Activated naive CD4-positive, alpha-beta T cell treated with anti-CD3 and anti-CD28 coated beads, Interleukin-2, amount 10 ng/mL, durations not matched to agents 7 days and 5 days (primary cell): ENCODE measurements at regions of chr1 and their contacts with region 1.

Region 1: GRCh38 chr1:197521118-197521739 is 253.2 kb downstream of the CRB1 start:
- DNase-seq: peak; percentile 21
- H3K4me3 Mint-ChIP-seq: no peak overlapping the region
- H3K27ac Mint-ChIP-seq: no peak overlapping the region
- H3K4me1 Mint-ChIP-seq: peaks cover 3% of the 10 kb centered on the region
- H3K27me3 Mint-ChIP-seq: no peaks in the 10 kb centered on the region

Region 2: GRCh38 chr1:197314682-197315081 is 206.5 kb before region 1 on chr1:
- CTCF ChIA-PET with region 1: no interaction called
- DNase-seq: no peak
- H3K4me3 Mint-ChIP-seq: no peak overlapping the region
- H3K27ac Mint-ChIP-seq: no peak overlapping the region
- H3K4me1 Mint-ChIP-seq: no peaks in the 10 kb centered on the region
- H3K27me3 Mint-ChIP-seq: no peaks in the 10 kb centered on the region

Region 3: DNA sequence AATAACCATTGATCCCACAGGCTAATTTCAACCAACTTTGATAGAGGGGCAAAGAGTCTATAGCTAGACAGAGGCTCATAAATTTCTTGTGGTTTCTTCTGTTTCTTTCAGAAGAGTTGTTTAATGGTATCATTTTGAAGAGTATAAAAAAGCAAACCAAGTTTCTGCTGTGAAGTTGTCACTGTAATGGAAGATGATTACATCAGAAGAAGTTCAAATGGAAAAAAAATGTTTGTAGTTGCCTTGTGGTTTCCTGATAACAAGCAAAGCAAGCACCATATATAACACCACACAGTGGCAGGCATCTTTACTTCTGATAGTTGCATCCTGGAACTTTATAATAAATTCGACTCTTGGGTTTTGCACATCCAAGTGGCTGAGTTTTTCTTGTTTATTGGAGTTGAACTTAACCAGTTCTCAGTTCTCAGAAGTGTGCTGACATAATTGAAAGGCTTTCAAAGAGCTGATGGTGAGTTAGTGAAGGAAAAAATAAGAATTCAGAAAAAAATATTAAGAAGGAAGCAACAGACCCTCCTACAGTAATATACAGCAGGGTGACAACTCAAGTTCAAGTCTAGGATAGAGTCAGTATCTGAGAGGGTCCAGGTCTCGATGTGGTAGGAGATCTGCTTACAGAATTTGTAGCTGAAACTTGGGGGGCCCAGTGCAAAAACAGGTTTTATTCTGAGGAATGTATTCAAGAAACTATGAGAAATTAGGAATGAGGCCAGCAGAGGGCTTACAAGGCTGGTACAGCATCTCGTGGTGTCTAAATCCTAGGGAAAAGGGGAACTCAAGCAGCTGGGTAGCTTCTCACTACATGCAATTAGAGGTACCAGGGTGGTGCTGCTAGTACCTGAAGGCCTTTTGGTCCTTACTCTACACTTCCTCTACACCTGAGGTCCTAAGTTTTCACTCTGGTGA is 129.7 kb before region 1 on chr1:
- CTCF ChIA-PET with region 1: no interaction called
- DNase-seq: peak; percentile 22
- H3K4me3 Mint-ChIP-seq: no peak overlapping the region
- H3K27ac Mint-ChIP-seq: peak overlapping the region; percentile 86
- H3K4me1 Mint-ChIP-seq: peaks cover 26% of the 10 kb centered on the region
- H3K27me3 Mint-ChIP-seq: no peaks in the 10 kb centered on the region

Region 4: GRCh38 chr1:197541411-197541810 is 20.2 kb after region 1 on chr1:
- CTCF ChIA-PET with region 1: interaction called, 11 read pairs
- DNase-seq: no peak
- H3K4me3 Mint-ChIP-seq: no peak overlapping the region
- H3K27ac Mint-ChIP-seq: no peak overlapping the region
- H3K4me1 Mint-ChIP-seq: no peaks in the 10 kb centered on the region
- H3K27me3 Mint-ChIP-seq: no peaks in the 10 kb centered on the region

Region 5: GRCh38 chr1:197868751-197869489 is 347.7 kb after region 1 on chr1:
- CTCF ChIA-PET with region 1: interaction called, 24 read pairs
- DNase-seq: peak; percentile 56
- H3K4me3 Mint-ChIP-seq: no peak overlapping the region
- H3K27ac Mint-ChIP-seq: no peak overlapping the region
- H3K4me1 Mint-ChIP-seq: no peaks in the 10 kb centered on the region
- H3K27me3 Mint-ChIP-seq: peaks cover 11% of the 10 kb centered on the region

Region 6: GRCh38 chr1:197924516-197925123 is 403.4 kb after region 1 on chr1:
- CTCF ChIA-PET with region 1: interaction called, 16 read pairs
- DNase-seq: no peak
- H3K4me3 Mint-ChIP-seq: no peak overlapping the region
- H3K27ac Mint-ChIP-seq: no peak overlapping the region
- H3K4me1 Mint-ChIP-seq: peaks cover 23% of the 10 kb centered on the region
- H3K27me3 Mint-ChIP-seq: peaks cover 63% of the 10 kb centered on the region